Activated naive CD4-positive, alpha-beta T cell treated with anti-CD3 and anti-CD28 coated beads for 36 hours (primary cell): ENCODE measurements at regions of chr13 and their contacts with region 1.

Region 1: DNA sequence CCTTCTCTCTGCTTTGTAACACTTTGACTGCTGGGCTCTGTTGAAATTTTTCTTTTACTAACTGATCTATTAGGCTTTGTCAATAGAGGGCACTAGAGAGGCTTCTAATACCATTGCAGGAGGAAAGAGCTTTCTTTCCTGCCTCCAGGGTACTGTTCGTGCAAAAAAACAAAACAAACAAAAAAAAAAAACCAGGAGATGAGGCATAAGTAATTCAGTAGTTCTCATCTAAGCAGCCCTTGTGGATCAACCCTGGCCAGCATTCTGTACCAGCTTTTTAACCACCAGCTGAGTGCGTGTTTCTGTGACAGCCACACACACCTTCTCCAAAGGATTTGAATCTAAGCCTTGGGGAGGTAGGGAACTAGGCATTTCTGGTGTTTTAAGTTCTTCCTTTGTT is 1707.6 kb upstream of the SLC10A2 start:
- DNase-seq: no peak
- H3K4me3 Mint-ChIP-seq: no peak overlapping the region
- H3K27ac Mint-ChIP-seq: no peak overlapping the region
- H3K4me1 Mint-ChIP-seq: peaks cover 5% of the 10 kb centered on the region
- H3K27me3 Mint-ChIP-seq: no peaks in the 10 kb centered on the region

Region 2: DNA sequence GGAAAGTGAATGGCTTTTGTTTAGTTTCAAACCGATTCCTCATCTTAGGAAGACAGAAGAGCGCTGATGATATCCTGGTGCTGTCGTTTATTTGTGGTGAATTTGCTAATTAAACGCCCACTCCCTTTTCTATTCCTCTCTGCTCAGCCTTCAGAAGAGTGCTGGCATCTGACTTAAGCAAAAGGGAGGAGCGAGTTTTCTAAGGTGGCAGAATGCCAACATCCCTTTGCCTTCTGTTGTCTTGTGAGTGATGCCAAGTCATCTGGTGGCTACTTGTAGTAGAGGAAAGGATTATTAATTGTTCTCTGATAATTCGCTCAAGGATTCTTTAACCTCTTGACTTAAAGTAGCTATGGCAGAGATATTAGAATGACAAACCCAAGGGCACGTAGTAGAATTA is 1859.9 kb before region 1 on chr13:
- CTCF ChIA-PET with region 1: no interaction called
- intact Hi-C with region 1: loop called (anchors 10 kb)
- DNase-seq: no peak
- H3K4me3 Mint-ChIP-seq: no peak overlapping the region
- H3K27ac Mint-ChIP-seq: no peak overlapping the region
- H3K4me1 Mint-ChIP-seq: no peaks in the 10 kb centered on the region
- H3K27me3 Mint-ChIP-seq: peaks cover 23% of the 10 kb centered on the region

Region 3: DNA sequence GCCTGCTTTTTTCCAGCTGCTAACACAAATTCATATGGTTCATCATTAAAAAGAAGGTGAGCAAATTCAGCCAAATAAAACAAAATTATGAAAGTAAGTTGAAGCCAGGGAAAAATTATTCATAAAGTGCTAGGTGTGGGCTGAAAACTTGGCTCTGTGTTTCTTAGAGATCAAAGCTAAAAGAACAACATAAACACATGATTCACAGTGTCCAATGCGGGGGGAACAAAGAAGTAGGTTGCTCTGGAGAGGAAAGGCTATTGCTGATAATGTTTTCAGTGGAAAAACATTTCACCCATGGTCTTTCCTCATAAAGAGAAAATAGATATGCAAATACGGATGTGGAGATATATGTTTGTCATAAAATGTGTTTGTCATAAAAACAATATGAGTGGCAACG is 16.1 kb before region 1 on chr13:
- CTCF ChIA-PET with region 1: interaction called, 14 read pairs
- intact Hi-C with region 1: no loop called
- DNase-seq: no peak
- H3K4me3 Mint-ChIP-seq: no peak overlapping the region
- H3K27ac Mint-ChIP-seq: no peak overlapping the region
- H3K4me1 Mint-ChIP-seq: no peaks in the 10 kb centered on the region
- H3K27me3 Mint-ChIP-seq: no peaks in the 10 kb centered on the region

Region 4: GRCh38 chr13:105139380-105140285 is 365.9 kb after region 1 on chr13:
- CTCF ChIA-PET with region 1: no interaction called
- intact Hi-C with region 1: loop called (anchors 10 kb)
- DNase-seq: peak; percentile 74
- H3K4me3 Mint-ChIP-seq: peak overlapping the region; percentile 89
- H3K27ac Mint-ChIP-seq: peak overlapping the region; percentile 99
- H3K4me1 Mint-ChIP-seq: peaks cover 17% of the 10 kb centered on the region
- H3K27me3 Mint-ChIP-seq: no peaks in the 10 kb centered on the region

Region 5: DNA sequence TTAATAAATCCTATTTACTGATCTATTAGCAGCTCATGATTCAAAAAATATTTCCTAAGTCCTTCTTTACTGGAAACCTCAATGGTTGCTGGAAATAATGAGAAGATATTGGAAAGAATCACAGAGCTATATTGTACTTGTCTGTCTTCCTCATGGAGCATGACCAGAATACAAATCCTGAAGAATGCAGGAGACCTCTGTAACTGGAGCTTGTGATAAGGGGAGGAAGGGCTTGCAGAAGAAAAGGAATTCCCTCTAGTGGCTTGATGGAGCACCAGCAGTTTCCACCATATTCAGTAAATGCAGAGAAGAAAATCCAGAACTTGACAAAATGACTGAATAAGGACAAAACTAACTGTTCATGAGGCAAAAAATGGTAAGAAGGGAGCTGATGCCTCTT is 428.6 kb after region 1 on chr13:
- CTCF ChIA-PET with region 1: no interaction called
- intact Hi-C with region 1: loop called (anchors 1 kb)
- DNase-seq: no peak
- H3K4me3 Mint-ChIP-seq: no peak overlapping the region
- H3K27ac Mint-ChIP-seq: no peak overlapping the region
- H3K4me1 Mint-ChIP-seq: no peaks in the 10 kb centered on the region
- H3K27me3 Mint-ChIP-seq: peaks cover 14% of the 10 kb centered on the region